OCI-LY7 (cell line): ENCODE measurements at regions of chr3 and their contacts with region 1.

Region 1: DNA sequence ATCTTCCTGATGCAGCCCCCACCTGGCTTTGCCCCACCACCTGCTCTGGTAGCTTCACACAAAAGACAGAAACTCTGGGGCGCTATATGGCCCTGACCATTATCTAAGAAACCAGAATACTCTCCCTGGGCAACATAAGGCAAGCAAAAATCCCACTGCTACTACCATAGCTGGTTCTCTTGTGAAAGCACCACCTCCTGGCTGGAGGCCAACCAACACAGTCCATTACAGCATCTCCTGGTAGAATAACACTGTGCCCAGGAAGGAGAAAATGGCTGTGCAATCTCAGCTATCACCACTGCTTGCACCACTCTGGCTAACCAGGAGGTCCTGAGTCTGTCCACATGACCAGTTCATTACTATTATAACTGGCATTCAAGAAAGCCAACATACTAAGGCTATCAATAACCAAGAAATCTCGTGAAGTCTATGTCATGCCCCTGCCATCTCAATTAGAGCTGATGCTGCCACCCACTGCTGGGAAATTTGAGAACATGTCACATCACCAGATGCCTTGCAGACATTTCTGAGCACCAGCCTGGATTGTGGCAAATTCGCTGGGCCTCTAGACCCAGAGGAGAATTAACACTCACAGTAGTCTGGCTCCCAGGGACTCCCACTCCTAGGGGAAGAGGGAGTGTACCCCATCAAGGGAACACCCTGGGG is 1114.8 kb downstream of the ROBO2 start:
- DNase-seq: no peak
- H3K4me3 ChIP-seq: no peak overlapping the region
- H3K27ac ChIP-seq: no peak overlapping the region
- H3K4me1 ChIP-seq: no peaks in the 10 kb centered on the region
- CTCF ChIP-seq: no peak

Region 2: GRCh38 chr3:78253860-78254259 is 99.2 kb after region 1 on chr3:
- CTCF ChIA-PET with region 1: no interaction called
- POLR2A ChIA-PET with region 1: interaction called, 10 read pairs
- intact Hi-C with region 1: no loop called
- DNase-seq: no peak
- H3K4me3 ChIP-seq: no peak overlapping the region
- H3K27ac ChIP-seq: no peak overlapping the region
- H3K4me1 ChIP-seq: no peaks in the 10 kb centered on the region
- CTCF ChIP-seq: no peak